MCF 10A (cell line): ENCODE measurements at regions of chr1 and their contacts with region 1.

Region 1: GRCh38 chr1:28642847-28643635 is at the start of gene TAF12:
- DNase-seq: peak; percentile 95
- H3K4me3 Mint-ChIP-seq: peak within 1 kb of the TSS; percentile 100
- H3K27ac Mint-ChIP-seq: peak within 1 kb of the TSS; percentile 98
- H3K4me1 Mint-ChIP-seq: peaks cover 18% of the 10 kb centered on the region
- H3K27me3 Mint-ChIP-seq: no peaks in the 10 kb centered on the region
- CTCF ChIP-seq: peak; percentile 31
- total RNA-seq, gene TAF12: 29.7 and 40.9 TPM in 2 replicates

Region 2: DNA sequence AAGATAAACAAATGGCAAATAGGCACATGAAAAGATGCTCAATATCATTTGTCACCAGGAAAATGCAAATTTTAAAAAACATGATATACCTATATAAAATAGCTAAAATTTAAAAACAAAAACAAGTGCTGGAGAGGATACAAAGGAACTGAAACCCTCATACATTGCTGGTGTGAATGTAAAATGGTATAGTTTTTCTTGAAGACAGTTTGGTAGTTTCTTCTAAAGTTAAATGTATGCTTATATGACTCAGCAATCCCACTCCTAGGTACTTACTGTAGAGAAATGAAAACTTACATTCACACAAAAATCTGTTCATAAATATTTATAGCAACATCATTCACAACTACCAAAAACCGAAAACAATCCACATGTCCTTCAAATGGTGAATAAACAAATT is 11.3 kb before region 1 on chr1:
- CTCF ChIA-PET with region 1: no interaction called
- POLR2A ChIA-PET with region 1: interaction called, 11 read pairs
- intact Hi-C with region 1: no loop called
- DNase-seq: no peak
- H3K4me3 Mint-ChIP-seq: no peak overlapping the region
- H3K27ac Mint-ChIP-seq: no peak overlapping the region
- H3K4me1 Mint-ChIP-seq: no peaks in the 10 kb centered on the region
- H3K27me3 Mint-ChIP-seq: no peaks in the 10 kb centered on the region
- CTCF ChIP-seq: no peak

Region 3: GRCh38 chr1:28668191-28668955 is 25.3 kb after region 1 on chr1 and contains the start of gene GMEB1:
- CTCF ChIA-PET with region 1: interaction called, 5 read pairs
- POLR2A ChIA-PET with region 1: interaction called, 94 read pairs
- intact Hi-C with region 1: no loop called
- DNase-seq: peak; percentile 88
- H3K4me3 Mint-ChIP-seq: peak within 1 kb of the TSS; percentile 87
- H3K27ac Mint-ChIP-seq: peak within 1 kb of the TSS; percentile 90
- H3K4me1 Mint-ChIP-seq: peaks cover 13% of the 10 kb centered on the region
- H3K27me3 Mint-ChIP-seq: no peaks in the 10 kb centered on the region
- CTCF ChIP-seq: no peak
- total RNA-seq, gene GMEB1: 9.1 and 13.3 TPM in 2 replicates

Region 4: GRCh38 chr1:28751315-28752060 is 108.4 kb after region 1 on chr1:
- CTCF ChIA-PET with region 1: interaction called, 3 read pairs
- POLR2A ChIA-PET with region 1: interaction called, 15 read pairs
- intact Hi-C with region 1: no loop called
- DNase-seq: no peak
- H3K4me3 Mint-ChIP-seq: no peak overlapping the region
- H3K27ac Mint-ChIP-seq: no peak overlapping the region
- H3K4me1 Mint-ChIP-seq: peaks cover 34% of the 10 kb centered on the region
- H3K27me3 Mint-ChIP-seq: no peaks in the 10 kb centered on the region
- CTCF ChIP-seq: no peak